Posterior vena cava (tissue), 2 donors: ENCODE measurements at regions of chr1 and their contacts with region 1.

Region 1: DNA sequence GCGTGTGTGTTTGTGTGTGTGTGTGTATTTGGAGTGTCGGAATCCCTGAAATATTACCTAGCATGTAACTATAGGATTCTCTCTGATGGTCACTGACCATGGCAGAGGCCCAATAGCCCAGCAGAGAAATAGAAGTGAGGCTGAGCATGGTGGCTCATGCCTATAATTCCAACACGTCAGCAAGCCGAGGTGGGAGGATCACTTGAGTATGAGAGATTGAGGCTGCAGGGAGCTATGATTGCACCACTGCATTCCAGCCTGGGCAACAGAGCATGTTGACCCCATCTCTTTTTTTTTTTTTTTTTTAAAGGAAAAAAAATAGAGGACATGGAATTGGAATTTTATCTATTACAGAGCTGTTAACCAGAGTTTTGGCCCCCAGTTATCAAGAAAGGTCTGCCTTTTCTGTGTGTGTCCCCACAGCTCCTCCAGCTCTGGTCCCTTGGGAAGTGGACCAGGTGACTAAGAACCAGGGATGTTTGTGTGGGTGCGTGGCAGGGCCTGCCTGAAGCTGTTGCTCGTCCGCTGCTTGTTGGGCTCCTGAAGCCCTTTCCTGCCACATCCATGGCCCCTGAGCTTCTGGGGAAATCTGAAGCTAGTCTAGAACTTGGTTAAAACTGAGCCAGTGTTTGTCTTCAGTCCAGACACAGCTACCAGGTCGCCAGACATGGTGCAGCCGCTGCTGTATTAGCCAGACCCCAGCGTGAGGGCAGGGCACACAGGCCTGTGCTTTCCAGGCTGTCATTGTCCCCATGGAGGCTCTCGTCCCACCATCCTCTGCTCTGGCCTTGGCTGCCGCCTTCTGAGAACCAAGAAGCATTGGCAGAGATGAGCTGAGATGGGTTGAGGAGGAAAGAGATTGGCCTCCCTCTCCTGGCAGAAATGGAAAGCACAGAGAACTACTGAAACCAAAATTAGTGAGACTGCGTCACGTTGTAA is 25.5 kb downstream of the CAPN9 start:
- DNase-seq: no peak

Region 2: GRCh38 chr1:230642263-230642959 is 130.3 kb before region 1 on chr1 and contains the start of gene COG2:
- intact Hi-C with region 1: loop called in 1 of 2 experiments (anchors 5 kb)
- DNase-seq: peak; percentile 98
- total RNA-seq, gene COG2: 18.1 to 18.5 TPM

Region 3: DNA sequence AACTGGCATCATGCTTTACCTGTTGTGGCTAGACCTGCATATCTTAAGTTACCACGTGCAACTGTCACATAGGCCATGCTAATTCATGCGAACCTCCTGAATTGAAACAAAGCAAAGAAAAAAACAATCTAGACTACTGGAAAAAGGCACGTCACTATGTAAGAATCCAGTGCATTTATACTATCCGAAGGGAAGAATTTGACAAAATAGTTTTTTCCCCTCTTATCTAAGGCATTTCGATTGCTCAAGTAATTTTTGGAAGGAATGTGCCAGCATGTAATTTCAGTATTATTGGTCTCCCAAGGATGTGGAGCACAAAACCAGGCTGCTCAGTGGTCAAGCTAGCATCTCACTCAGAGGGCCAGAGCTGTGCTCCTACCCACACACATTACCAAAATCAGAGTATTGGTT is 127.1 kb after region 1 on chr1:
- intact Hi-C with region 1: no loop called
- DNase-seq: no peak

Region 4: GRCh38 chr1:231844986-231845502 is 1072.3 kb after region 1 on chr1:
- intact Hi-C with region 1: loop called in 1 of 2 experiments (anchors 5 kb)
- DNase-seq: no peak